Mammary epithelial cell (primary cell): ENCODE measurements at regions of chr4 and their contacts with region 1.

Region 1: GRCh38 chr4:6716018-6716911 is at the start of gene BLOC1S4:
- DNase-seq: peak; percentile 85
- H3K4me3 ChIP-seq: peak within 1 kb of the TSS; percentile 48 to 95 (median 90)
- H3K27ac ChIP-seq: peak within 1 kb of the TSS; percentile 55
- H3K4me1 ChIP-seq: peaks cover 4% of the 10 kb centered on the region
- H3K27me3 ChIP-seq: no peaks in the 10 kb centered on the region
- CTCF ChIP-seq: peak in 1 of 2 donors; percentile 29
- total RNA-seq, gene BLOC1S4: 14.1 to 15.3 TPM

Region 2: GRCh38 chr4:6640292-6641163 is 75.7 kb before region 1 on chr4 and contains the start of gene MRFAP1:
- CTCF ChIA-PET with region 1: no interaction called
- dilution Hi-C with region 1: no loop called
- in situ Hi-C with region 1: no loop called
- intact Hi-C with region 1: loop called (anchors 2 kb)
- DNase-seq: peak; percentile 96
- H3K4me3 ChIP-seq: peak within 1 kb of the TSS; percentile 77 to 87 (median 85)
- H3K27ac ChIP-seq: peak within 1 kb of the TSS; percentile 89
- H3K4me1 ChIP-seq: peaks cover 12% of the 10 kb centered on the region
- H3K27me3 ChIP-seq: no peaks in the 10 kb centered on the region
- CTCF ChIP-seq: no peak
- total RNA-seq, gene MRFAP1: 71.2 to 248 TPM

Region 3: DNA sequence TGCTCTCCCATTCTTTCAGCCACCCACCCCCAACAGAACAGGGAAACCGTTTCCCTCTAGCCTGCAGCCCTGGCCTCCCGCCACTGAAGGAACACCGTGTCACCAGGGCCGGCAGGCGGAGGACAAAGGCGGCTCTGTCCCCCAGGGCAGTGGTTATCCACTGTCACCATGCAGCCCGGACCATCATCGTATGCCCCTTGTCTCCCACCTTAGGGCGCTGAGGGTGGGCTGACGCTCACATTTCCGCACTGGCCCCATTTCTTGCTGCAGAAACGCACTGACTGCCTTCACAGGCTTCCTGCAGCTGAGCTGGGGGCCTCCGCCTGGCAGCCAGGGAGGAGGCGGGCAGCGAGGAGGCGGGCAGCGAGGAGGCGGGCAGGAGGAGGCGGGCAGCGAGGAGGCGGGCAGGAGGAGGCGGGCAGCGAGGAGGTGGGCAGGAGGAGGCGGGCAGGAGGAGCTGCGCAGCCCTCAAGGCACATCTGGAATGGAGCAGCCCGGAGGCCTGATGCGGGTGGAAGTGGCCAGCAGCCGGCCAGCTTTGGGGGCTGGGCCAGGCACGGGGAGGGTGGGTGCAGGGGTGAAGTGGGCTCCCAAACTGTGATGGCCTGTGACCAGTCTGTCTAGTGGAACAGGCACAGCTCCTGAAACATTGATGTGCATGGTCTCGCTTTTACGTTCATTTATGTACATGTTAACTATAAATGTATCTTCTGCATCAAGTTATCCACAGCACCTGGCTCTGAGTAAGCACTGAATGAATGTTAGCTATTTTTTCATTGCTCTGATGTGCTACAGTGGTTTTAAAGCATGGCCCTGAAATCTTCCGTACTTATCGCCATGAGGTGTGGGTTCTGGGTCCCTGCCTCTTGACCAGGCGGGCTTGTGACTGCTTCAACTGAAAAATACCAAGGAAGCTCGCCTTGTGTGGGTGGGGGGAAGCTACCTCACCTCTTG is 45.7 kb after region 1 on chr4:
- CTCF ChIA-PET with region 1: interaction called, 4 read pairs
- dilution Hi-C with region 1: no loop called
- in situ Hi-C with region 1: loop called in 1 of 2 experiments (anchors 5 kb)
- intact Hi-C with region 1: loop called (anchors 1 kb)
- DNase-seq: no peak
- H3K4me3 ChIP-seq: no peak overlapping the region
- H3K27ac ChIP-seq: no peak overlapping the region
- H3K4me1 ChIP-seq: peaks cover 27% of the 10 kb centered on the region
- H3K27me3 ChIP-seq: peaks cover 3% of the 10 kb centered on the region
- CTCF ChIP-seq: no peak

Region 4: GRCh38 chr4:6824071-6824470 is 107.8 kb after region 1 on chr4:
- CTCF ChIA-PET with region 1: no interaction called
- dilution Hi-C with region 1: no loop called
- in situ Hi-C with region 1: no loop called
- intact Hi-C with region 1: no loop called
- DNase-seq: no peak
- H3K4me3 ChIP-seq: no peak overlapping the region
- H3K27ac ChIP-seq: no peak overlapping the region
- H3K4me1 ChIP-seq: no peaks in the 10 kb centered on the region
- H3K27me3 ChIP-seq: no peaks in the 10 kb centered on the region
- CTCF ChIP-seq: no peak

Region 5: GRCh38 chr4:6873792-6874461 is 157.7 kb after region 1 on chr4:
- CTCF ChIA-PET with region 1: interaction called, 15 read pairs
- dilution Hi-C with region 1: no loop called
- in situ Hi-C with region 1: loop called (anchors 10 kb)
- intact Hi-C with region 1: loop called (anchors 1 kb)
- DNase-seq: peak; percentile 43
- H3K4me3 ChIP-seq: no peak overlapping the region
- H3K27ac ChIP-seq: no peak overlapping the region
- H3K4me1 ChIP-seq: peaks cover 21% of the 10 kb centered on the region
- H3K27me3 ChIP-seq: no peaks in the 10 kb centered on the region
- CTCF ChIP-seq: peak; percentile 87 to 98

Region 6: GRCh38 chr4:6974138-6974848 is 258.0 kb after region 1 on chr4:
- CTCF ChIA-PET with region 1: interaction called, 3 read pairs
- dilution Hi-C with region 1: no loop called
- in situ Hi-C with region 1: no loop called
- intact Hi-C with region 1: loop called (anchors 5 kb)
- DNase-seq: peak; percentile 76
- H3K4me3 ChIP-seq: no peak overlapping the region
- H3K27ac ChIP-seq: no peak overlapping the region
- H3K4me1 ChIP-seq: no peaks in the 10 kb centered on the region
- H3K27me3 ChIP-seq: no peaks in the 10 kb centered on the region
- CTCF ChIP-seq: peak; percentile 99

Region 7: DNA sequence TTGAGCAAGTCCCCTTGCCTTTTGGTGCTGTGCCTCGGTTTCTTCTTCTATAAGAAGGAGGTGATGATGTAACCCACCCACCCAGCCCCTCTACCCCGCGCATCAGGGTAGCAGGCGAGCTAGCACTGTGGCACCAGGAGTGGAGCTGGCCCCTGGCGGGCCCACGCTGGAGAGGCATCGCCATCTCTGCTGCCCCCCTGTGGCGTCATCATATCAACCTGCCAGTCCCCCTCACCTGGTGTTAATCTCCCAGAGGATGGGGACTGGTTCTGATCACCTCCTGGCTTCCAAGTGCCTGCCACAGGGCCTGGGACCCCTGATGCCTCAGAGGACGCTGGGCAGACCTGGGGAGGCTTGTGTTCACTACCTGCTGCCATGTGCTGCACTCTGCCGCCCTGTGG is 469.8 kb after region 1 on chr4:
- CTCF ChIA-PET with region 1: no interaction called
- dilution Hi-C with region 1: no loop called
- in situ Hi-C with region 1: no loop called
- intact Hi-C with region 1: loop called (anchors 2 kb)
- DNase-seq: no peak
- H3K4me3 ChIP-seq: no peak overlapping the region
- H3K27ac ChIP-seq: no peak overlapping the region
- H3K4me1 ChIP-seq: no peaks in the 10 kb centered on the region
- H3K27me3 ChIP-seq: no peaks in the 10 kb centered on the region
- CTCF ChIP-seq: peak in 1 of 2 donors; percentile 46